Activated B cell treated with CpG ODN at 0.5 μM for 24 hours (primary cell): ENCODE measurements at regions of chr21 and their contacts with region 1.

Region 1: GRCh38 chr21:31604591-31605190 is 54.8 kb upstream of the SOD1 start:
- DNase-seq: peak; percentile 33
- ATAC-seq: peak; percentile 52
- H3K4me3 Mint-ChIP-seq: no peak overlapping the region
- H3K27ac Mint-ChIP-seq: no peak overlapping the region
- H3K4me1 Mint-ChIP-seq: peaks cover 2% of the 10 kb centered on the region
- H3K27me3 Mint-ChIP-seq: peaks cover 9% of the 10 kb centered on the region
- CTCF ChIP-seq: no peak

Region 2: GRCh38 chr21:30340441-30341241 is 1264.0 kb before region 1 on chr21:
- CTCF ChIA-PET with region 1: no interaction called
- POLR2A ChIA-PET with region 1: no interaction called
- intact Hi-C with region 1: loop called (anchors 5 kb)
- DNase-seq: no peak
- ATAC-seq: no peak
- H3K4me3 Mint-ChIP-seq: no peak overlapping the region
- H3K27ac Mint-ChIP-seq: no peak overlapping the region
- H3K4me1 Mint-ChIP-seq: no peaks in the 10 kb centered on the region
- H3K27me3 Mint-ChIP-seq: no peaks in the 10 kb centered on the region
- CTCF ChIP-seq: no peak

Region 3: DNA sequence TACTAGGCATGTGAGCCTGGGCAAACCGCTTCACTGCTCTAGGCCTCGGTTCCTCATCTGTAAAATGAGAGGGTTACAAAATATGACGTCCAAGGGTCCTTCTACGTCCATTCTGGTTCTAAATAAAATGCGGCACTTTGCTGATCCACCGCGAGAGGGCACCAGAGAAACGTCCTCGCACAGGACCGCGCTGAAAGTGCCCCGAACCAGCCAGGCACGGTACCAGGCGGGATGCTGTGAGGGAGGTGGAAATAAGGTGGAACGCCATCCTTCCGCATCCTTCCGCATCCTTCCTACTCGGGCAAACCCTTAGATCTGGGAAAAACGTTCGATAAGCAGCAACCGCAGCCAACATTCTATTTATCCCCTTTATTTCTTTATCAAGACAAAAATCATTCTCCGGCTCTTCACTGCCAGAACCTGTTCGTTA is 506.1 kb before region 1 on chr21:
- CTCF ChIA-PET with region 1: interaction called, 8 read pairs
- POLR2A ChIA-PET with region 1: no interaction called
- intact Hi-C with region 1: loop called (anchors 1 kb)
- DNase-seq: peak; percentile 46
- ATAC-seq: peak; percentile 67
- H3K4me3 Mint-ChIP-seq: no peak overlapping the region
- H3K27ac Mint-ChIP-seq: no peak overlapping the region
- H3K4me1 Mint-ChIP-seq: peaks cover 12% of the 10 kb centered on the region
- H3K27me3 Mint-ChIP-seq: peaks cover 10% of the 10 kb centered on the region
- CTCF ChIP-seq: no peak

Region 4: DNA sequence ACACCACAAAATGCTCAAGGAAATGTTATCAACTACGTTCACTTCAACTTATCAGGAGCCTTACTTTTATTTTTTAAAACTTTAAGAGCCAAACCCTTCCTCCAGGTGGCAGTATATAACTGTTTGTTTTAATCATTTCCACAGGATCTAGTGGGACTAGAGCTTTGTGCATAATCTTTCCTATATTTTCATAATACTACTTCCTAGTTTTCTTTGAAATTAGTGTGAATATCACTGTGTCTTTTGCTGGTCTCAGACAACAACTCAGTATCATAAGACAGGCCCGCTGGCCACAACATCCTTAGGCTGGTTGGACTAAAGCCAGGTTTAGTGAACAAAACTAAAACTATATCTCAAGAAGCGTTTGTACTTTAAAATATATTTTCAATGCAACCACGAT is 406.1 kb before region 1 on chr21:
- CTCF ChIA-PET with region 1: interaction called, 15 read pairs
- POLR2A ChIA-PET with region 1: interaction called, 3 read pairs
- intact Hi-C with region 1: loop called (anchors 1 kb)
- DNase-seq: no peak
- ATAC-seq: no peak
- H3K4me3 Mint-ChIP-seq: no peak overlapping the region
- H3K27ac Mint-ChIP-seq: no peak overlapping the region
- H3K4me1 Mint-ChIP-seq: peaks cover 17% of the 10 kb centered on the region
- H3K27me3 Mint-ChIP-seq: no peaks in the 10 kb centered on the region
- CTCF ChIP-seq: peak; percentile 17

Region 5: GRCh38 chr21:31580866-31581276 is 23.8 kb before region 1 on chr21:
- CTCF ChIA-PET with region 1: interaction called, 5 read pairs
- POLR2A ChIA-PET with region 1: no interaction called
- intact Hi-C with region 1: loop called (anchors 1 kb)
- DNase-seq: peak; percentile 42
- ATAC-seq: peak; percentile 85
- H3K4me3 Mint-ChIP-seq: no peak overlapping the region
- H3K27ac Mint-ChIP-seq: no peak overlapping the region
- H3K4me1 Mint-ChIP-seq: no peaks in the 10 kb centered on the region
- H3K27me3 Mint-ChIP-seq: peaks cover 8% of the 10 kb centered on the region
- CTCF ChIP-seq: no peak

Region 6: GRCh38 chr21:32257962-32258785 is 653.5 kb after region 1 on chr21:
- CTCF ChIA-PET with region 1: no interaction called
- POLR2A ChIA-PET with region 1: no interaction called
- intact Hi-C with region 1: loop called (anchors 10 kb)
- DNase-seq: no peak
- ATAC-seq: no peak
- H3K4me3 Mint-ChIP-seq: no peak overlapping the region
- H3K27ac Mint-ChIP-seq: no peak overlapping the region
- H3K4me1 Mint-ChIP-seq: no peaks in the 10 kb centered on the region
- H3K27me3 Mint-ChIP-seq: peaks cover 12% of the 10 kb centered on the region
- CTCF ChIP-seq: no peak

Region 7: GRCh38 chr21:33588485-33589335 is 1984.0 kb after region 1 on chr21 and contains the start of gene DONSON:
- CTCF ChIA-PET with region 1: no interaction called
- POLR2A ChIA-PET with region 1: no interaction called
- intact Hi-C with region 1: no loop called
- DNase-seq: peak; percentile 94
- ATAC-seq: peak; percentile 95
- H3K4me3 Mint-ChIP-seq: peak within 1 kb of the TSS; percentile 90
- H3K27ac Mint-ChIP-seq: peak within 1 kb of the TSS; percentile 56
- H3K4me1 Mint-ChIP-seq: peaks cover 10% of the 10 kb centered on the region
- H3K27me3 Mint-ChIP-seq: no peaks in the 10 kb centered on the region
- CTCF ChIP-seq: no peak
- total RNA-seq, gene DONSON: 4.4 and 4.7 TPM in 2 replicates